ENCODE measurements at regions of chr1 and their contacts with region 1.

Region 1: DNA sequence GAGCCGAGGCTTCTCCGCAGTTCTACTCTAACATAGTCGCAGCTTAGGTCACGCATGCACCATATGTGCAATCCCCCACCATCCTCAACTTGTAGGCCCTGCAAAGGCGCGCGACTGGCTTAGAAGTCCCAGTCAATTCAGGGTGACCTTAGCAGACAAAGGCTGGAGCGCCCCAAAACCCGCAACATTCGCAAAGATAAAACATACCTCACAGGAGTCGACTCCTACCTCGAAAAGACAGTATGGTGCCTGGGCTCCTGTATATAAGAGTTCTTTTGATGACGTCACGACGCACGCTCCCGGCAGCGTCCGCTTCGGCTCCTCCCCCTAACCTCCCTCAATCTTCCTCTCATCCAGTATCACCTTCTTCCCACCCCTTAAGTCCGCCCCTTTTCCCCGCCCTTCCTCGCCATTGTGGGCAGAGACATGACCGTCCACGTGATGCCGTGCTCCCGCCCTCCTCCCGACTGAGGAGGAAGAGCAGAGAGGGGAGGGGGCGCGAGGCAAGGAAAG is at the start of gene GAS5:
- DNase-seq: peak; percentile 100
- H3K4me3 Mint-ChIP-seq: peak within 1 kb of the TSS; percentile 81
- H3K27ac Mint-ChIP-seq: peak within 1 kb of the TSS; percentile 100
- H3K4me1 Mint-ChIP-seq: peaks cover 28% of the 10 kb centered on the region
- H3K27me3 Mint-ChIP-seq: peaks cover 13% of the 10 kb centered on the region
- CTCF ChIP-seq: no peak
- total RNA-seq, gene GAS5: 345 and 367 TPM in 2 replicates

Region 2: DNA sequence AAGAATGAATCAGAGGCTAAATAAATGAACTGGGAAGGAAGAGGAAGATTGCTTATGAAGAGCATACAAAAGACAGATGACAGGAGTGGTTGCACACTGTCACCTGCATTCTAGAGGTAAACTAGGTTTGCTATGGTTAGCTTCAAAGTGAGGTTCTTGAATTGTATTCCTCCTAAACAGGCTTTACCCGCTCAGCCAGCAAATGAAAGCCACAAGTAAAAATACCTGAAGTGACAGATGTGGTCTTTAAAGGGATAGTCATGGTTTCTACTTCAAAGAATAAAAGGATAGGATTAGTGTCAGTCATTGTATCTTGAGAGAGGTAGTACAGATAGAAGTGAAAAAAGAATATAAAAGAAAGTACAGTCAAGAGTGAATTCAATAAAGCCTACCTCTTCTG is 423.1 kb before region 1 on chr1:
- CTCF ChIA-PET with region 1: no interaction called
- intact Hi-C with region 1: no loop called
- DNase-seq: no peak
- H3K4me3 Mint-ChIP-seq: no peak overlapping the region
- H3K27ac Mint-ChIP-seq: no peak overlapping the region
- H3K4me1 Mint-ChIP-seq: no peaks in the 10 kb centered on the region
- H3K27me3 Mint-ChIP-seq: no peaks in the 10 kb centered on the region
- CTCF ChIP-seq: no peak

Region 3: DNA sequence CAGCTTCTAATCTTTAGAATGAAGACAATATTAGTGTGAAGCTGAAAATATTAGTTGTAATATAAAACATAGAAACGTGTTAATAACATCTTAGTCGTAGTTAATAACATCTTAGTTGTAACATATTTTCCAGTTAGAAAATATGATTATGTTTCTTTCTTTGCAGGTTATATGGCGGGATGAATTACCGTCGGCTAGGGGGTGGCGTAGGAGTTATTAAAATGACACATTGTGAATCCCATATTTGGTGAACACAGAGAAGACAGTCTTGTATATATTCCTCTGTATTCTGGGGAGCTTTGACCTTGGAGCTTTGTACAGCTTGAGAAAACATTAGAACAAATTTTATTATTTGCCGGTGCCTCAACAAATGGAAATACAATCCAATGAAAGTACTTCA is 82.8 kb before region 1 on chr1:
- CTCF ChIA-PET with region 1: no interaction called
- intact Hi-C with region 1: no loop called
- DNase-seq: no peak
- H3K4me3 Mint-ChIP-seq: no peak overlapping the region
- H3K27ac Mint-ChIP-seq: no peak overlapping the region
- H3K4me1 Mint-ChIP-seq: no peaks in the 10 kb centered on the region
- H3K27me3 Mint-ChIP-seq: no peaks in the 10 kb centered on the region
- CTCF ChIP-seq: no peak

Region 4: GRCh38 chr1:173914366-173914871 is 46.6 kb after region 1 on chr1:
- CTCF ChIA-PET with region 1: no interaction called
- intact Hi-C with region 1: no loop called
- DNase-seq: peak; percentile 58
- H3K4me3 Mint-ChIP-seq: no peak overlapping the region
- H3K27ac Mint-ChIP-seq: no peak overlapping the region
- H3K4me1 Mint-ChIP-seq: no peaks in the 10 kb centered on the region
- H3K27me3 Mint-ChIP-seq: peaks cover 12% of the 10 kb centered on the region
- CTCF ChIP-seq: peak; percentile 71

Region 5: DNA sequence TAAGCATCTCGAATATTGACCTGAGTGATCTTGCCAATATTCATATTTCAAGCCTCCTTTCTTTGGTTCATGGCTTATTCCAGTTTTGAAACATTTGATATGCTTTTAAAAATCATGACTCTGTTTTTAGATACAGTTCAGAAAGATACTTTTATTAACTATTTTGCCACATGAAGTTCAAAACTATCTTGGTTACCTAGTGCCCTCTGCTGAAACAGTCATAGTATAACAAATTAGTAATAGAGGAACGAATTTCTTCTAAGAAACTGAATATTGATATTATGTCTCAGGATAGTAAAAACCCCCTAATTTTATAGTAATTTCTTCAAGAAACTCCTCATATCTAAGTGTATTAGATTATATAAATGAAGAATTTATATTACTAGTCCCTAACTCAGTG is 206.9 kb after region 1 on chr1:
- CTCF ChIA-PET with region 1: interaction called, 5 read pairs
- intact Hi-C with region 1: loop called (anchors 5 kb)
- DNase-seq: no peak
- H3K4me3 Mint-ChIP-seq: no peak overlapping the region
- H3K27ac Mint-ChIP-seq: no peak overlapping the region
- H3K4me1 Mint-ChIP-seq: no peaks in the 10 kb centered on the region
- H3K27me3 Mint-ChIP-seq: no peaks in the 10 kb centered on the region
- CTCF ChIP-seq: peak; percentile 11